Naive thymus-derived CD8-positive, alpha-beta T cell (primary cell): ENCODE measurements at regions of chr6 and their contacts with region 1.

Region 1: DNA sequence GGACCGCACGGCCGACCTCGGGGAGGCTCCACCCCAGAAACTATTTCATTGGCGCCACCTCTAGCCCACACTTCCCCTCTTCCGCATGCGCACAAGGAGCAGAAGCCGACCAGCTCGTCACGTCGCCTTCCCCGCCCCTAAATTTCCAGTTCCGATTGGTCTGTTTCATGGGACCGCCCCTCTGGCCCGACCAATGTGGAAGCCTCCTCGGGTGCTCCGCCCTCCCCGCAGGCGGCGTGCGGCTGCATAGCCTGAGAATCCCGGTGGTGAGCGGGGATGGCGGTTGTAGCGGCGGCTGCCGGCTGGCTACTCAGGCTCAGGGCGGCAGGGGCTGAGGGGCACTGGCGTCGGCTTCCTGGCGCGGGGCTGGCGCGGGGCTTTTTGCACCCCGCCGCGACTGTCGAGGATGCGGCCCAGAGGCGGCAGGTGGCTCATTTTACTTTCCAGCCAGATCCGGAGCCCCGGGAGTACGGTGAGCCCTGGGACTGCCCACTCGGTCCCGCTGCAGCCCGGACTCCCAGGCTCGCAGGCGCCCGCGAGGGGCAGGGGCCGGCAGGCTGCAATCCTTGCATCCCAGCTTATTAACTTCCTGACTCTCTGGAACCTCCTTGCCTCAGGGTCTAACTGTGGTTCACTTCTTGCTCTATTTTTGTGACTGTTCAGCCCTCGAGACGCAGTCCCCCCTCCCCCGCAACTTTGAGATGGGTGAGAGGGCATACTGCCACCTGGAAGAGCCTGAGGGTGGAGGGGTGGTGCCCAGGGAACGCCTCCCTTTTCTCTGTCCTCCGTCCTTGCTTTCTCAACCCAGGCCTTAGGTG is at the start of gene BCKDHB:
- DNase-seq: peak; percentile 87 to 99 (median 98)
- ATAC-seq: peak; percentile 97
- H3K4me3 Mint-ChIP-seq: peak within 1 kb of the TSS; percentile 86 to 98 (median 92)
- H3K27ac Mint-ChIP-seq: peak within 1 kb of the TSS; percentile 56 to 96 (median 91)
- H3K4me1 Mint-ChIP-seq: peaks cover 15 to 28% (median 22%) of the 10 kb centered on the region in 4 donors
- H3K27me3 Mint-ChIP-seq: peaks cover 0 to 11% (median 3%) of the 10 kb centered on the region in 5 donors
- polyA plus RNA-seq, gene BCKDHB: 24.1 to 31.4 (median 26.4) TPM

Region 2: DNA sequence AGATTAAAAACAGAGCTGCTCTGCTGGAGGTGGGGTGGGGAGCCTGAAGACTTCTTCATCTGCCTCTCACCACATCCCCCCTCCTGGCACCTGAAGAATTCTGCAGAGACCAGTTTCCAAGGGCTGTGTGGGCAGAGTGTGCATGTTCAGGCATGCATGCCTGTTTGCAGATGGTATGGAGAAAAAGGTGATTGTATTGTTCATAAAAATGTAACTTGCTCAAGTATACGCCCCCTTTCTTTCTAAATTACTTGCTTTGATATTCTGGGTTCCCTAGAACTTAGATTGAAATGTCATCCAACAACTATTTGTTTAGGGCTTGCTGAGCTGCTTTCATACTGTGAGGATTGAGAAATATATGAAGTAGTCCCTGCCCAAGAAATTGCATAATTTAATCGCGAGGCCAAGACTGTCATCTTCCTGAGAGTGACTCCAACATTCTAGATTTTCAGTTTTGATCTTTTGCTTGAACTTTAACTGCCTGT is 653.0 kb before region 1 on chr6:
- POLR2A ChIA-PET with region 1: no interaction called
- DNase-seq: no peak
- ATAC-seq: no peak
- H3K4me3 Mint-ChIP-seq: no peak overlapping the region
- H3K27ac Mint-ChIP-seq: no peak overlapping the region
- H3K4me1 Mint-ChIP-seq: no peaks in the 10 kb centered on the region
- H3K27me3 Mint-ChIP-seq: peaks cover 0 to 14% (median 0%) of the 10 kb centered on the region in 5 donors

Region 3: GRCh38 chr6:80004173-80005072 is 102.2 kb before region 1 on chr6 and contains the start of gene TTK:
- POLR2A ChIA-PET with region 1: interaction called, 13 read pairs
- DNase-seq: peak; percentile 86 to 95 (median 91)
- ATAC-seq: peak; percentile 98
- H3K4me3 Mint-ChIP-seq: peak within 1 kb of the TSS; percentile 88 to 99 (median 96)
- H3K27ac Mint-ChIP-seq: peak within 1 kb of the TSS; percentile 88 to 98 (median 96)
- H3K4me1 Mint-ChIP-seq: peaks cover 7 to 22% (median 20%) of the 10 kb centered on the region in 4 donors
- H3K27me3 Mint-ChIP-seq: peaks cover 0 to 3% (median 3%) of the 10 kb centered on the region in 5 donors
- polyA plus RNA-seq, gene TTK: 0.30 to 0.86 (median 0.44) TPM

Region 4: DNA sequence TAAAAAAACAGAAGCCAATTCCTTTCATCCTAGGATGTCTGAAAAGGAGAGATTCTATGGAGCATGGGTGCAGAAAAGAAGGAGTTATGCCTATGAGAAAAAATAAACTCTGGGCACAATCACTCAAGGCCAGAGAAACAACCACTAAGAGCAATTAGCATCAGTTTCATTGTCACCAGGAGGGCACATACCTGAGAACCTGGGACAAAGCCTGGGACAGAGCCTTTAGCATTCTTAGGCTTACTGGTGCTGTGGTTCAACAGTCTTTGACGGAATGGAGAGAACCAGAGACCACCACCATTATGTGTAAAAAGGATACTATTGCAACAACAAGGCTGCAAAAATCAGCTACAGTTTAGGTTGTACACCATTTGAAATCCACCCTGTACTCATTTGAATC is 29.6 kb before region 1 on chr6:
- POLR2A ChIA-PET with region 1: no interaction called
- DNase-seq: no peak
- ATAC-seq: no peak
- H3K4me3 Mint-ChIP-seq: no peak overlapping the region
- H3K27ac Mint-ChIP-seq: no peak overlapping the region
- H3K4me1 Mint-ChIP-seq: no peaks in the 10 kb centered on the region
- H3K27me3 Mint-ChIP-seq: peaks cover 0 to 4% (median 3%) of the 10 kb centered on the region in 5 donors

Region 5: DNA sequence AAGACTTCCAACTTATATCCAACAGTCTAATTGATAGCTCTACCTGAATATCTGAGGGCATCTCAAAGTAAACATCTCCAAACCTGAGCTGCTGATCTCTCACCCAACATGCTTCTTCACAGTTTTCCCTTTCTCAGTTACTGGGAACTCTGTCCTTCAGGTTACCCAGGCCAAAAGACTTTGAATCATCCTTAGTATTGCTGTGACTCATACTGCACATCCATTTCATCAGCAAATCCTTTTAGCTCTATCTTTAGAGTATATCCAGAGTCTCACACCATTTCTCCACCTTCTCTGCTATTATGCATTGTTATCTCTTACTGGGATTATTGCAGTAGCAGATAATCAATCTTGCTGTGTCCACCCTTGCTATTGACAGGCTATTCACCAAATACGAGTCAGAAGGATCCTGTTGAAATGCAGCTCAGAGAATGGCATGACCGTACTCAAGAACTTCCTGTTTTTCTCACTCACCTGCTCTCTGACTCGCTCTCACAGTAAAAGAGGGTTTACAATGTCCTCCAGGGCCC is 57.1 kb after region 1 on chr6:
- POLR2A ChIA-PET with region 1: interaction called, 10 read pairs
- DNase-seq: peak in 4 of 10 donors; percentile 2 to 23 (median 11)
- ATAC-seq: peak; percentile 76 to 77
- H3K4me3 Mint-ChIP-seq: no peak overlapping the region
- H3K27ac Mint-ChIP-seq: no peak overlapping the region
- H3K4me1 Mint-ChIP-seq: peaks cover 0 to 8% (median 1%) of the 10 kb centered on the region in 4 donors
- H3K27me3 Mint-ChIP-seq: no peaks in the 10 kb centered on the region

Region 6: GRCh38 chr6:80250391-80250997 is 143.9 kb after region 1 on chr6:
- POLR2A ChIA-PET with region 1: no interaction called
- DNase-seq: no peak
- ATAC-seq: no peak
- H3K4me3 Mint-ChIP-seq: no peak overlapping the region
- H3K27ac Mint-ChIP-seq: peak overlapping the region in 1 of 10 donors; percentile 34
- H3K4me1 Mint-ChIP-seq: peaks cover 0 to 13% (median 2%) of the 10 kb centered on the region in 4 donors
- H3K27me3 Mint-ChIP-seq: no peaks in the 10 kb centered on the region

Region 7: GRCh38 chr6:81752138-81752920 is 1645.7 kb after region 1 on chr6 and contains the start of gene TENT5A:
- POLR2A ChIA-PET with region 1: interaction called, 18 read pairs
- DNase-seq: peak; percentile 69 to 95 (median 88)
- ATAC-seq: peak; percentile 73 to 77
- H3K4me3 Mint-ChIP-seq: peak within 1 kb of the TSS; percentile 92 to 98 (median 97)
- H3K27ac Mint-ChIP-seq: peak within 1 kb of the TSS; percentile 87 to 98 (median 97)
- H3K4me1 Mint-ChIP-seq: peaks cover 24 to 41% (median 35%) of the 10 kb centered on the region in 4 donors
- H3K27me3 Mint-ChIP-seq: peaks cover 0 to 4% (median 0%) of the 10 kb centered on the region in 5 donors
- polyA plus RNA-seq, gene TENT5A: 2.6 to 4.6 (median 3.4) TPM